AG04450 (cell line): ENCODE measurements at regions of chr12 and their contacts with region 1.

Region 1: DNA sequence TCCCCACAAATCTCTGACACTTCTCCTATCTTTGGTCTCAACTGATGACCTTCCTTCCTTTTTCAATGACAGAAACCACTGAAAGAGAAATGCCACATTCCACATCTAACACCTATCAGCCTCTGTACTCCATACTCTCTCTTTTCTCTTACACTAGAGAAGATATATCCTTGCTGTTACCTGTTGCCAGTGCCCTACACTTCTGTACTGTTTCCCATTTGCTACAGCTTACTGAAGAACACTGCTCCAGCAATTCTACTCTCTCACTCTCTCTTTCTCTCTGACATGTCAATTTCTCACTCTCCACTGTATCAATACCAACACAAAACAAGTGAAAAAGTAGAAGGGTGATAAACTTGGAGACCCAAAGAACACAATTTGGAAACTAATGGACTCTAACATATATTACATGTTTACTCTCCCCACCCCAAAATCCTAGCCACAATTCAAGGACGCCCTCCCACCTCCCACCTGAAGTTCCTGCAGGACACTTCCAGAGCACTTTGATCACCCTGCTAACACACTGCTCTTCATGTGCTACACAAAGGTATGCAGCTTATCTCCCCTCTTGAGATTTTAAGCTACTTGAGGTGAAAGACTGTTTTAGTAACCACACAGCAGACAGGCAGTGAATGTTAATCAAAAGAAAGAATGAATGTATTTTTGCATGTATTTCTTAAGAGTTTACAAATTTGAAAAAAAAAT is 95.0 kb downstream of the MED13L start:
- DNase-seq: no peak
- H3K4me3 ChIP-seq: no peak overlapping the region
- H3K27ac ChIP-seq: no peak overlapping the region
- H3K27me3 ChIP-seq: no peaks in the 10 kb centered on the region
- CTCF ChIP-seq: no peak

Region 2: DNA sequence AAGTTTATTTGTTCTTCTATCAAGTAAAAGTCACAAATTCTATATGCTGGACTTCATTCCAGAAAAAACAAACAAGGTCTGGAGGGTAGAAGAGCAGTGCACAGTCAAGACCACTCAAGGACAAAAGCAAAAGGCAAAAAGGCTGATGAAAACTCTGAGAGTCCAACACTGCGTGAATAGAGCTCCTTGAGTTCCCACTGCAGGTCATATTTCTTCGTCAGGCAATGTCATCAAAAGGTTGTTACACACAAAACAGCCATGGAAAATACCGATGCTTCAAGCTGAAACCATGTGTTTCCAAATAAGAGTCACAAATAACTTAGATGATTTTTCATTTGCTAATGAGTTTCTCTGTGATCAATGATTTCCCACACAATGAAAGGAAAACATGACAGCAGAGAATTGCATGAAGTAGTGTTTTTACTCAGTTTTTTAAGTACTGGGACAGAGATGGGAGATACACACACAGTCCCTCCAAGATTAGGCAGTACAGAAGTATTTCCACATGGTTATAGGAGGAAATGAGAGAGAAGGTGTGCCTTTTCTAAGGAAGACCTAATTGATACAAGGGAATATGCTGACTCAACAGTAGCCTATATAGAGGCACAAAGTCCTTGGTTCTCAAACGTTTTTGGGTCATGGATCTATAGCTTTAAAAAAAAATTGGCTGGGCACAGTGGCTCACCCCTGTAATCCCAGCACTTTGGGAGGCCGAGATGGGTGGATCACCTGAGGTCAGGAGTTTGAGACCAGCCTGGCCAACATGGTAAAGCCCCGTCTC is 82.7 kb before region 1 on chr12:
- CTCF ChIA-PET with region 1: no interaction called
- POLR2A ChIA-PET with region 1: interaction called, 11 read pairs
- DNase-seq: no peak
- H3K4me3 ChIP-seq: no peak overlapping the region
- H3K27ac ChIP-seq: no peak overlapping the region
- H3K27me3 ChIP-seq: no peaks in the 10 kb centered on the region
- CTCF ChIP-seq: no peak

Region 3: GRCh38 chr12:116244001-116244400 is 61.5 kb after region 1 on chr12:
- CTCF ChIA-PET with region 1: no interaction called
- POLR2A ChIA-PET with region 1: no interaction called
- DNase-seq: peak; percentile 63
- H3K4me3 ChIP-seq: no peak overlapping the region
- H3K27ac ChIP-seq: no peak overlapping the region
- H3K27me3 ChIP-seq: no peaks in the 10 kb centered on the region
- CTCF ChIP-seq: no peak